Caco-2 (cell line): ENCODE measurements at regions of chr10 and their contacts with region 1.

Region 1: GRCh38 chr10:8350351-8350967 is 296.0 kb downstream of the GATA3 start:
- DNase-seq: peak in 1 of 2 experiments; percentile 61
- H3K4me3 ChIP-seq: no peak overlapping the region
- H3K4me3 Mint-ChIP-seq: peak overlapping the region; percentile 44
- H3K27ac Mint-ChIP-seq: peak overlapping the region; percentile 60
- H3K4me1 ChIP-seq: peaks cover 55% of the 10 kb centered on the region
- H3K4me1 Mint-ChIP-seq: peaks cover 43% of the 10 kb centered on the region
- H3K27me3 ChIP-seq: no peaks in the 10 kb centered on the region
- H3K27me3 Mint-ChIP-seq: no peaks in the 10 kb centered on the region
- CTCF ChIP-seq: no peak

Region 2: DNA sequence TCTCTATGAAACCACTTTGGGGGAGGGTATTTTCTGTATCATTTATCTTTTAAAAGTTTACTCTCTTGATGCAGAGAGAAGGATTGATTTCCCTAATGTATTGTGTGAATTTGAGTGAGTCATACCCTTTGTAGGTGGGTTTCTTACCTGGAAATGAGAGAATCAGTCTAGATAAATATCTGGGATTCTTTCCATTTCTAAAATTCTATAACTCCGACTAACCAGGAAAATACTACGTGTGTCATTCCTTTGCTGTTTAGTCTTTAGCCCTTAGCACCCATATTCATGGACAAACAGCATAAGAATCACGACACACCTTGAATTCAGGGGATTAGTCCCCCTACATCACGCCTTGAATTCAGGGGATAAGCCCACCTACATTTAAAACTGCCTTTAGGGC is 156.9 kb before region 1 on chr10:
- CTCF ChIA-PET with region 1: no interaction called
- POLR2A ChIA-PET with region 1: no interaction called
- intact Hi-C with region 1: loop called (anchors 2 kb)
- DNase-seq: no peak
- H3K4me3 ChIP-seq: no peak overlapping the region
- H3K4me3 Mint-ChIP-seq: peak overlapping the region; percentile 32
- H3K27ac Mint-ChIP-seq: peak overlapping the region; percentile 40
- H3K4me1 ChIP-seq: peaks cover 29% of the 10 kb centered on the region
- H3K4me1 Mint-ChIP-seq: peaks cover 10% of the 10 kb centered on the region
- H3K27me3 ChIP-seq: no peaks in the 10 kb centered on the region
- H3K27me3 Mint-ChIP-seq: no peaks in the 10 kb centered on the region
- CTCF ChIP-seq: no peak

Region 3: GRCh38 chr10:8279598-8279997 is 70.9 kb before region 1 on chr10:
- CTCF ChIA-PET with region 1: no interaction called
- POLR2A ChIA-PET with region 1: no interaction called
- intact Hi-C with region 1: loop called (anchors 5 kb)
- DNase-seq: peak; percentile 46 to 55
- H3K4me3 ChIP-seq: no peak overlapping the region
- H3K4me3 Mint-ChIP-seq: no peak overlapping the region
- H3K27ac Mint-ChIP-seq: no peak overlapping the region
- H3K4me1 ChIP-seq: peaks cover 9% of the 10 kb centered on the region
- H3K4me1 Mint-ChIP-seq: peaks cover 11% of the 10 kb centered on the region
- H3K27me3 ChIP-seq: no peaks in the 10 kb centered on the region
- H3K27me3 Mint-ChIP-seq: no peaks in the 10 kb centered on the region
- CTCF ChIP-seq: no peak

Region 4: DNA sequence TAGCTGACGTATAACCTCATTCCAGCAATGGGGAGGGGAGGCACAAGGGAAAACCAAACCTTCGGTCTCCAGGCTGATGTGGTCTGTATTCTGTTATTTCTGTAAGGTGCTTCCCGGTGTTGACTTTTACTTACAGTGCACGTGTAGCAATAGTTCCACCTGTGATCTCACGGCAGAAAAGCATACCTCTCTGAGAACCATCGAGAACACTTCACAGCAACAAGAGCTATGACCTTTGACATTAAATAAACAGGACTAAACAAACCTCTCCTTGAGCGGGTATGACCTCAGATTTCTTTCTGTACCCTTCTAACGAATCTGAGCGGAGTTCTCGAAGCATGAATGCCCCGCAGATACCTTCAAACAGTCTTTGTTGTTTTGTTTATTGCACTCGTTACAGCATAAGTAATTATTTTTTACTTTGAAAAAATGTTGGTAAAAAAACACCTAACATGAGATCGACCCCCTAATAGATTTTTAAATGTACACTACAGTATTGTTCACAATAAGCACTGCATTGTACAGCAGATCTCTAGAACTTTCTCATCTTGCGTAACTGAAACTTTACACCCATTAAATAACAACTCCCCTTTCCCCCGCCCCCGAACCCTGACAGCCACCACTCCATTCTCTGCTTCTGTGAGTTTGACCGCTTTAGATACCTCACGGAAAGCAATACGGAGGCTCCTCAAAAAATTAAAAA is 13.7 kb before region 1 on chr10:
- CTCF ChIA-PET with region 1: no interaction called
- POLR2A ChIA-PET with region 1: no interaction called
- intact Hi-C with region 1: loop called (anchors 1 kb)
- DNase-seq: peak; percentile 52 to 56
- H3K4me3 ChIP-seq: 0 out of 2 replicates have a peak overlapping the region, but pooled peaks have one; percentile 8
- H3K4me3 Mint-ChIP-seq: peak overlapping the region; percentile 61
- H3K27ac Mint-ChIP-seq: peak overlapping the region; percentile 55
- H3K4me1 ChIP-seq: peaks cover 8% of the 10 kb centered on the region; the same call in 1 of the 2 replicates
- H3K4me1 Mint-ChIP-seq: peaks cover 14% of the 10 kb centered on the region
- H3K27me3 ChIP-seq: no peaks in the 10 kb centered on the region
- H3K27me3 Mint-ChIP-seq: no peaks in the 10 kb centered on the region
- CTCF ChIP-seq: no peak